ENCODE measurements at regions of chr1 and their contacts with region 1.

Region 1: GRCh38 chr1:193059268-193060225 is at the starts of genes RO60 and UCHL5:
- DNase-seq: peak; percentile 93 to 98 (median 97)
- ATAC-seq: peak; percentile 94 to 97 (median 94)
- H3K4me3 ChIP-seq: peak within 1 kb of the TSS; percentile 67 to 83 (median 74)
- H3K27ac ChIP-seq: peak within 1 kb of the TSS; percentile 90 to 97 (median 92)
- H3K4me1 ChIP-seq: peaks cover 13 to 32% (median 30%) of the 10 kb centered on the region in 3 donors
- H3K27me3 ChIP-seq: no peaks in the 10 kb centered on the region
- CTCF ChIP-seq: no peak
- total RNA-seq, gene RO60: 14.0 to 31.3 (median 22.7) TPM
- total RNA-seq, gene UCHL5: 14.8 to 26.8 (median 17.8) TPM

Region 2: GRCh38 chr1:193104906-193105820 is 45.6 kb after region 1 on chr1 and contains the start of gene GLRX2:
- intact Hi-C with region 1: loop called in 1 of 3 experiments (anchors 5 kb)
- DNase-seq: peak; percentile 84 to 95 (median 87)
- ATAC-seq: peak; percentile 95 to 98 (median 97)
- H3K4me3 ChIP-seq: peak within 1 kb of the TSS; percentile 64 to 91 (median 88)
- H3K27ac ChIP-seq: peak within 1 kb of the TSS; percentile 83 to 86 (median 84)
- H3K4me1 ChIP-seq: peaks cover 0 to 9% (median 5%) of the 10 kb centered on the region in 3 donors
- H3K27me3 ChIP-seq: no peaks in the 10 kb centered on the region
- CTCF ChIP-seq: no peak
- total RNA-seq, gene GLRX2: 4.1 to 12.9 (median 7.6) TPM

Region 3: GRCh38 chr1:193377472-193377871 is 317.9 kb after region 1 on chr1:
- intact Hi-C with region 1: no loop called
- DNase-seq: no peak
- ATAC-seq: no peak
- H3K4me3 ChIP-seq: no peak overlapping the region
- H3K27ac ChIP-seq: no peak overlapping the region
- H3K4me1 ChIP-seq: no peaks in the 10 kb centered on the region
- H3K27me3 ChIP-seq: no peaks in the 10 kb centered on the region
- CTCF ChIP-seq: no peak

Region 4: DNA sequence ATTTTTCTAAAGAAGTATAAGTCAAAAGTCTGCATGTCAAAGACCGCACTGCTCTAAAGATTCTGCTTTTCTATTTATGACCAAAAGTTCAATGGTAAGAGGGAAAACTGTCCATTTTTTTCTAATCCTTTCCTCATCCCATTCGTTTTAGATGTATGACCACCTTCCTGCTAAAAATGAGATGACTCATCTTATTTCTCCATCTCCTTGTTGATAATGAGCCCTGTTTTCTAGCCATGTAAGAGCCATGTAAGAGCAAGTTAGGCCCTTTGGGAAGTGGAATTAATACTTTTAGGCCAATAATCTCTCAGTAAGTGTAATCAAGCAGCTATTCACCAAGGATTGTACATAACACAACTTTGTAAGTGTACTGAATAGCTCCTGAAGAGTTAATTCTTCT is 602.5 kb after region 1 on chr1:
- intact Hi-C with region 1: no loop called
- DNase-seq: no peak
- ATAC-seq: no peak
- H3K4me3 ChIP-seq: no peak overlapping the region
- H3K27ac ChIP-seq: no peak overlapping the region
- H3K4me1 ChIP-seq: no peaks in the 10 kb centered on the region
- H3K27me3 ChIP-seq: no peaks in the 10 kb centered on the region
- CTCF ChIP-seq: no peak

Measured in pancreas (tissue), 10 donors.